HEK293 (cell line): ENCODE measurements at regions of chr9 and their contacts with region 1.

Region 1: DNA sequence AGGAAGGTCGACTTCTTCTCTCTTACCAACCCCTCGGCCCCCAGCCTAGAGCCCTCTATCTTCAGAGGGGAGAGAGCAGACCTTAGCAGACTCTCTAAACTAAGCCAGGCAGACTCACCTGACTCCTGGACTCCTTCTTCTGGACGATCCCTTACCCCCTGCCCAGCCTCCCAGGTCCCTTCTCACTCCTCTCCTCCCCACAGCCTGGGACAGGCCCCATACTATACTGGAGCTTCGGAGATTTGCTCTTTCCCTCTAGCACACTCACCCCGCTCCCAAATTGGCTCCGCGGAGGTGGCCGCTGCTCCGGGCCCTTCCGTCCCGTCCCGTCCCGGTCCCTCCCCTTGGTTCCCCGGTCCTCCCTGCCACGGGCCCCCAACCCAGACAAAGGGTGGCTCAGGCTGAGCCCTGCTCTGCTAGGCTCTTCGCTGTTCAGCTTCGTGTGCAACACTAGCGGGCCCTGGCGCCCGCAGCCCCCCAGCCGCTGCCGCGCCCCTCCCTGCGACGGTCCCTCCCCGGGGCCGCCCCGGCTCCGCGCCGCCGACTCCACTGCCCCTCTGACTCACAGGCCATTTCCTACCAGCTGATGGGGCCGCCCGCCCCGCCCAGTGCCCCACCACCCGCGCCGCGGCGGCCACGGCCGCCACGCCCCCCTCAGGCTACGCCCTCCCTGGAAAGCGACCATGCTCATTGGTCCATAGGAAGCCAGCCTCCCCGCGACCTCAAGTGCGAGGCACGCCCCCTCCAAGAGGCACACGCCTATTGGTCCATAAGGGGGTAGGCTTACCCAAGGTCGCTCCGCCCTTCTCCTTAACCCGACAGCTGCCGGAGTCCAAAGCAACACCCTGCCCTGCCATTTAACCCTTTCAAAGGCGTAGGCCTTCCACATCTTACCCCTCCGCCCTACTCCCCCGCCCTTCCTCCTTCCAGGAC is 4.4 kb downstream of the ATOSB start:
- H3K4me3 ChIP-seq: peak overlapping the region; percentile 65
- H3K27ac ChIP-seq: no peak overlapping the region; the same call in 1 of the 2 replicates
- H3K4me1 ChIP-seq: peaks cover 15% of the 10 kb centered on the region
- CTCF ChIP-seq: no peak

Region 2: GRCh38 chr9:34346873-34347799 is 764.1 kb before region 1 on chr9:
- CTCF ChIA-PET with region 1: no interaction called
- POLR2A ChIA-PET with region 1: no interaction called
- H3K4me3 ChIP-seq: no peak overlapping the region
- H3K27ac ChIP-seq: no peak overlapping the region
- H3K4me1 ChIP-seq: no peaks in the 10 kb centered on the region
- CTCF ChIP-seq: no peak

Region 3: GRCh38 chr9:35096035-35096849 is 15.0 kb before region 1 on chr9 and contains the start of gene PIGO:
- CTCF ChIA-PET with region 1: interaction called, 8 read pairs
- POLR2A ChIA-PET with region 1: interaction called, 92 read pairs
- H3K4me3 ChIP-seq: peak within 1 kb of the TSS; percentile 90
- H3K27ac ChIP-seq: peak within 1 kb of the TSS; percentile 84
- H3K4me1 ChIP-seq: no peaks in the 10 kb centered on the region
- CTCF ChIP-seq: peak; percentile 83

Region 4: DNA sequence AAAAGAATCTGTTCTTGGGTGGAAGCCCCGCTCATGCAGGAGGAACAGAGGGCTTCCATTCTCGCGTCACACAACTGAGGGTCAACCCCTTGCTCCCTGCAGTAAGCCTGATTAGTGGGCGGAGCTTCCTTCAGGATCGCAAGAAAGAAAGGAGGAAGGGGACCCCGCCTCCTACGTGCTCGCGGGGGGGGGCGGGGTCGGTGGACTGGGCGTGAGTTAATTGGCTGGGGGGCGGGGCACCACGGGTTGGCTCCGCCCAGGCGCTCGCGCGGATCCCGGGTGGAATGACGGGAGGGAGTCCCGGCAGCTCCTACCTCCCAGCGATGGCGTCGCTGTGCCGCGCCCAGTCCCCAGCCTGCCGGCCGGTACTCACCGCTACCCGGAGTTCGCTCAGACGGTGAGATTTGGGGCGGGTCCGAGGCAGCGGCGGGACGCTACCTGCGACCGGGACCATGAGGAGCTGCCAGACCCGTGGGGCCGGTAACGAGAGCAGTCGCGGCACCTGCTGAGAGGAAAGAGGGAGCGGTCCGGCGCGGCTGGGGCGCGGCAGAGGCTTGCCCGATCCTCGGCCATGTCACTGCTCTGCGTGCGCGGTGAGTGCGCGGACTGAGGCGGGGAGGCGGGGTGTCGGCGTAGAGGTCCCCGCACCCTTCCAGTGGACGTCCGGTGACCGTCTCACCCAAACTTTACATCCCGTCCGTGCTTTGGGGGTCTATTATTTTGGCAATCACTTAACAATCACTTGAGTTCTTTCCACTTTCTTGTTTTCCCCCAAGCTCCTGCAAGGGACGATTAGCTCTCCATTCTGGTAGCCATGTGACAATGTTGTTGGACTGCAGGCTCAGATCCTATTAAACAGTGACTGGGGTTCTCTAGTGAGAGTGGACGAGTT is 50.7 kb after region 1 on chr9 and contains the start of gene UNC13B:
- CTCF ChIA-PET with region 1: interaction called, 3 read pairs
- POLR2A ChIA-PET with region 1: interaction called, 31 read pairs
- H3K4me3 ChIP-seq: peak within 1 kb of the TSS; percentile 99
- H3K27ac ChIP-seq: peak within 1 kb of the TSS; percentile 40; the same call in 1 of the 2 replicates
- H3K4me1 ChIP-seq: peaks cover 7% of the 10 kb centered on the region
- CTCF ChIP-seq: peak; percentile 63; the same call in 1 of the 2 replicates